BJ (cell line): ENCODE measurements at regions of chr17 and their contacts with region 1.

Region 1: DNA sequence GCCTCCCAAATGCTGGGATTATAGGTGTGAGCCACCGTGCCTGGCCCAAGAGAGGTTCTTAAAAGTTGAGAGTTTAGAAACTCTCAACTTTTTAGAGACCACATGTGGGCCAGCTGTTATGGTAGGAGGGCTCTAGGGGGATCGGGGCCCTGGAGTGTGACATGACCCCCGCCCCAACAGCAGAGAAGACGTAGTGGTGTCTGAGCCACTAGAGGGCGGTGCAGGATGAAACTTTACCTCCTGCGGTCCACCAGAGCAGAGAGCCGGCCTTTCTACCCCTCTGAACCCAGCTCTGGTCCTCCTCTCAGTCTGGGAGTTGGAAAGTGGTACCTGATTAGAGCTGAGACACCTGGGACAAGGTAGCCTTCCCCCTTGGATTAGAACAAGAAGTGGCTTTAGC is 7.4 kb downstream of the CDK5RAP3 start:
- DNase-seq: no peak
- H3K4me3 ChIP-seq: no peak overlapping the region
- H3K27me3 ChIP-seq: no peaks in the 10 kb centered on the region
- CTCF ChIP-seq: peak; percentile 81

Region 2: DNA sequence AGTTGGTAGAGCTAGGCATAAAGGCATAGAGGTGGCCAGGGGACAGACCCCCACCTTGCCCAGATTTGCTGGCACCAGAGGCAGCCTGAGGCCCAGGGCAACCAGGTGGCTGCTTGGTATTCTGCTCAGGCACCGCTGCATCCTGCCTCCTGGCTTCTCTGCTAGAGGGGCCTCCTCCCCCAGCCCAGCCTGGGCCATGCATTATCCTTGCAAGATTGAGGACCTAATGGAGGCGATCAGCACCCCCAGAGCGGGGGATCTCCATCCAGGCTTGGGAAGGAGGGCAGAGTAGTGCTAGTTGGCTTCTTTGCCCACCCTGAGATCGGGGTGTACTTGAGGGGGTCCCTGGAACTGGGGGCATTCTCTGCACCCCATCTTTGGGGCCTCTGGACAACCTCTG is 16.4 kb after region 1 on chr17:
- CTCF ChIA-PET with region 1: interaction called, 11 read pairs
- POLR2A ChIA-PET with region 1: no interaction called
- DNase-seq: no peak
- H3K4me3 ChIP-seq: no peak overlapping the region
- H3K27me3 ChIP-seq: 0 out of 2 replicates have a peak, but pooled peaks cover 1% of the 10 kb centered on the region
- CTCF ChIP-seq: no peak

Region 3: GRCh38 chr17:48002266-48002915 is 24.1 kb after region 1 on chr17:
- CTCF ChIA-PET with region 1: interaction called, 12 read pairs
- POLR2A ChIA-PET with region 1: no interaction called
- DNase-seq: peak; percentile 28
- H3K4me3 ChIP-seq: no peak overlapping the region
- H3K27me3 ChIP-seq: no peaks in the 10 kb centered on the region
- CTCF ChIP-seq: no peak